Right cardiac atrium (tissue), 5 donors: ENCODE measurements at regions of chr7 and their contacts with region 1.

Region 1: DNA sequence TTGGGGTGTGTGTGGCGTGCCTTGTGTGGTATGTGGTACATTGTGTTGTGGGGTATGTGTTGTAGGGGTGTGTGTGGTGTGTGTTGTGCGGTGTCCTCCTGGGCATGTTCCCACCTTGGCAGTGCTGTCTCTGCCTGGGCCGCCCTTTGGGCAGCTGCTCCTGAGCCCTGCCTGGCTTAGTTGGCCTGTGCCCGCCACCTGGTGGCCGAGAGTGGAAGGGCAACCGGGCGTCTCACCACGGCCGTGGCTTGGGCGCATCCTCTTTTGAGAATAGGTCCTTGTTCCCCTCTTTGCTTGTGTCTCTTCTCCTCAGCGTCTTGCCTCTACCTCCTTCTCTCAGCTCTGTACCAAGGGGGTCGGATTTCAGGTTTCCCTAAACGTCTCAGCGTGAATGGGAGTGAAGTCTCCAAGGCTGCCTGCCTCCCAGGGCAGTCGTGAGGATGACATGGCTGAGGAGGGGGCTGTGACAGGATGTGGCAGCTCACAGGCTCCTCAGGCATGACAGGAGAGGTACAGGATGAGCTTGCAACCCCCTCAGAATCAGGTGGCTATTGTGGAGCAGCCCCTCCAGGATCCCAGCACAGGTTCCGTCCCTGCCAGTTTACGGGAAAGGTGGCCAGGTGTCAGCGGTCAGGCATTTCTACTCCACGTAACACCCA is 98.4 kb upstream of the PODXL start:
- DNase-seq: peak; percentile 90 to 97 (median 96)
- ATAC-seq: peak; percentile 78 to 87
- H3K4me3 ChIP-seq: no peak overlapping the region
- H3K27ac ChIP-seq: no peak overlapping the region
- H3K4me1 ChIP-seq: peaks cover 6% of the 10 kb centered on the region
- H3K27me3 ChIP-seq: no peaks in the 10 kb centered on the region

Region 2: GRCh38 chr7:131507592-131508331 is 147.0 kb before region 1 on chr7:
- intact Hi-C with region 1: loop called (anchors 2 to 5 kb)
- DNase-seq: peak; percentile 86 to 96 (median 94)
- ATAC-seq: peak; percentile 58 to 64
- H3K4me3 ChIP-seq: no peak overlapping the region
- H3K27ac ChIP-seq: no peak overlapping the region
- H3K4me1 ChIP-seq: peaks cover 16% of the 10 kb centered on the region
- H3K27me3 ChIP-seq: no peaks in the 10 kb centered on the region

Region 3: DNA sequence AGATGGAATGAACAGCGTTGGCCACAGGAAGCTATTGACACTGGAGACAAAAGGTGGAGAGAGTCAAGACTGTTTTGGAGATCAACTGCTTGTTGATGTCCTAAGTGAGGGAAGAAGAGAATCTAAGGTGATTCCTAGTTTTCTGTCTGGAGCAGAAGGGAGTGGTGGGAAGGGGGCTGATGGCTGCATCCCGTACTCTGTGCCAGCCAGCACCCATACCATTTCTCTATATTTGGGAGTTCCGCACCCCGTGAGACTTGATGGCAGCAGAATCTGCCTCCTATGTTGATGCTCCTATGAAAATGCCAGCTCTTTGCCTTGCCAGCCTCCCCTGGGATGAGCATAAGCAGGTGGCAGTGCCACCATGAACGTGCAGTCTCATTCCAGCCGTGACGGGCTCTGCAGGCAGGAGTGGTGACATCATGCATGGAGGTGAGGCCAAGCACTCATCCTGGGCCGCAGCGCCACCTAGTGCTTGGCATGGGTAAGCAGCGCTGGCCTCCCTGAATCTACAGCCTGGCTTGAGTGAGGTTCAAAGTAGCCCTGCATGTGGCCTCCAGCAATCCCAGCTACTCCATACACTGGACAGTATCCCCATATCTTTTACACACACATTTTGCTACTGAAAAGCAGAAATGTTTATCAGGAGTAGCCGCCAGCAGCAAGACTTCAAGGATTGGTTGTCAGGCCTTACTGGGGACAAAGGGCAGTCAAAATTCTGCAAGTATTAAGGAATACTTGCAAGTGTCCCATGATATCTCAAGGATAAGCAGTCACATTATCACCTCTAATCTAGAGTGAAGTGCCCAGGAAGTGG is 141.3 kb before region 1 on chr7:
- intact Hi-C with region 1: loop called in 3 of 4 experiments (anchors 2 to 5 kb)
- DNase-seq: peak; percentile 83 to 93 (median 93)
- ATAC-seq: peak; percentile 85 to 91
- H3K4me3 ChIP-seq: no peak overlapping the region
- H3K27ac ChIP-seq: peak overlapping the region; percentile 68
- H3K4me1 ChIP-seq: peaks cover 12% of the 10 kb centered on the region
- H3K27me3 ChIP-seq: no peaks in the 10 kb centered on the region

Region 4: DNA sequence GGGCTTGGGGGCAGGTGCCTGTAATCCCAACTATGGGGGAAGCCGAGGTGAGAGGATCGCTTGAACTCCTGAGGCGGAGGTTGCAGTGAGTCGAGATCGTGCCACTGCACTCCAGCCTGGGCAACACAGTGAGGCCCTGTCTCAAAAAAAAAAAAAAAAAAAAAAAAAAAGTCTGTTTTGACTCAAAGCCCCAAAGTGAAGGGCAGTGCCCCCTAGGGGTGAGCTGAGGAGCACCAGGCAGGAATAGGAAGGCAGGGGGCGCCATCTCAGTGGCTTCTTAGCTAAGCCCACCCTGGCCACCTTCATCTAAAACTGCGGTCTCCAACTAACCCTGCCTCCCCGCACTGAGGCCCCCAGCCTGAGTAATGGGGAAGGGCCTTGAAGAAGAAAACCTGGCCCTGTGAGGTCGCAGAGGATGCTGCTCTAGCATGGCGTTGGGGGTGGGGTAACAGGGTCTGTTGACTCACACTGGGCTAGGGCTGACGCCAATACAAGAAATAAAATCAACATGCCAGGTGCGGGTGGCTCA is 108.2 kb before region 1 on chr7:
- intact Hi-C with region 1: loop called in 3 of 4 experiments (anchors 2 to 10 kb)
- DNase-seq: peak in 2 of 3 donors; percentile 63 to 66
- ATAC-seq: no peak
- H3K4me3 ChIP-seq: no peak overlapping the region
- H3K27ac ChIP-seq: no peak overlapping the region
- H3K4me1 ChIP-seq: peaks cover 9% of the 10 kb centered on the region
- H3K27me3 ChIP-seq: no peaks in the 10 kb centered on the region

Region 5: DNA sequence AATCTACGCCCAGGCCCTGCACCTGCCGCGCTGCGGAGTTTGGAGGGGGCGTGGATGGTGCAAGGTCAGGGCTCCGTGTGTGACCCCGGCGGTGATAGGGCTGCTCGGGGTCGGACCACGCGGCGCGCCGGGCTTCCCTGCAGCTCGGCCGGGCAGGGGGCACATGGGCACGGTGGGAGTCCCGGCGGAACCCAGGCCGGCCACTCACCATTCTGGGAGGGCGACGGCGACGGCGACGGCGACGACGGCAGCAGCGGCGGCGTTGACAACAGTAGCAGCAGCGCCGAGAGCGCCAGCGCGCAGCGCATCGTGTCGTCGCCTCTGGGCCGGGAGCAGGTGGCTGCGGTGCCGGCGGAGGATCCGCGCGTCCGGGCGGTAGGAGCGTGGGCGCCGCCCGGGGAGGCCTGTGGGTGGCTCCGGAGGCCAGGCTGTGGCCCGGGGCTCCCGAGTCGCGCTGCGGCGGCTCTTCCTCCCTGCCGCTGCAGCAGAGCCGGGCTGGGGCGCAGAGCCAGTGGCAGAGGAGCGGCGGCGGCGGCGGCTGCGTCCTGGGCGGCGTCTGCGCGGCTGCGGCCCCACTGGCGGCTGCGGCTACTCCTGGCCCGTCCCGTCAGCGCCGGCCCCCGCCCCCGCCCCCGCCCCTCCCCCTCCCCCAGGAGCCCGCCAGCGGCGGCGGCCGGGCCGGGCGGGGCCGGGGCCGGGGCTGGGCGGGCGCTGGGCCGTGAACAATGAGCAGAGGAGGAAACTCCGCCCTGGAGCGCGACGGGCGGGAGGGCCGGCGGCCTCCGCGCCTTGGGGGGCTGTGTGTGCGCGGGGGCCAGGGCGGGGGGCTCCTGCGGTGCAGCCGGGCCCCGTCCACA is 98.5 kb before region 1 on chr7 and contains the start of gene PODXL:
- intact Hi-C with region 1: loop called in 2 of 4 experiments (anchors 5 to 10 kb)
- DNase-seq: peak; percentile 84 to 94 (median 94)
- ATAC-seq: peak; percentile 80 to 84
- H3K4me3 ChIP-seq: peak within 1 kb of the TSS; percentile 35
- H3K27ac ChIP-seq: peak within 1 kb of the TSS; percentile 43
- H3K4me1 ChIP-seq: peaks cover 10% of the 10 kb centered on the region
- H3K27me3 ChIP-seq: no peaks in the 10 kb centered on the region
- total RNA-seq, gene PODXL: 60.7 to 81.1 (median 63.9) TPM